CD8-positive, alpha-beta memory T cell (primary cell): ENCODE measurements at regions of chr2 and their contacts with region 1.

Region 1: GRCh38 chr2:233404222-233404621 is 49.9 kb downstream of the DGKD start:
- DNase-seq: peak; percentile 41 to 80 (median 54)
- H3K4me3 ChIP-seq: no peak overlapping the region
- H3K4me3 Mint-ChIP-seq: no peak overlapping the region
- H3K27ac ChIP-seq: no peak overlapping the region
- H3K27ac Mint-ChIP-seq: peak overlapping the region in 7 of 8 donors; percentile 6 to 81 (median 73)
- H3K4me1 ChIP-seq: peaks cover 55% of the 10 kb centered on the region
- H3K4me1 Mint-ChIP-seq: peaks cover 54 to 77% (median 57%) of the 10 kb centered on the region in 3 donors
- H3K27me3 ChIP-seq: no peaks in the 10 kb centered on the region
- H3K27me3 Mint-ChIP-seq: no peaks in the 10 kb centered on the region

Region 2: GRCh38 chr2:233247765-233248164 is 156.5 kb before region 1 on chr2:
- CTCF ChIA-PET with region 1: no interaction called
- POLR2A ChIA-PET with region 1: no interaction called
- DNase-seq: peak in 4 of 5 donors; percentile 13 to 65 (median 28)
- H3K4me3 ChIP-seq: no peak overlapping the region
- H3K4me3 Mint-ChIP-seq: peak overlapping the region in 2 of 7 donors; percentile 22 to 46
- H3K27ac ChIP-seq: no peak overlapping the region
- H3K27ac Mint-ChIP-seq: peak overlapping the region; percentile 20 to 95 (median 78)
- H3K4me1 ChIP-seq: peaks cover 42% of the 10 kb centered on the region
- H3K4me1 Mint-ChIP-seq: peaks cover 38 to 61% (median 52%) of the 10 kb centered on the region in 3 donors
- H3K27me3 ChIP-seq: no peaks in the 10 kb centered on the region
- H3K27me3 Mint-ChIP-seq: peaks cover 0 to 2% of the 10 kb centered on the region in 2 donors

Region 3: GRCh38 chr2:233418761-233419625 is 14.8 kb after region 1 on chr2:
- CTCF ChIA-PET with region 1: interaction called, 151 read pairs
- POLR2A ChIA-PET with region 1: interaction called, 15 read pairs
- DNase-seq: peak; percentile 13 to 74 (median 44)
- H3K4me3 ChIP-seq: peak overlapping the region; percentile 73
- H3K4me3 Mint-ChIP-seq: peak overlapping the region; percentile 87 to 93 (median 88)
- H3K27ac ChIP-seq: no peak overlapping the region
- H3K27ac Mint-ChIP-seq: peak overlapping the region; percentile 67 to 98 (median 93)
- H3K4me1 ChIP-seq: peaks cover 97% of the 10 kb centered on the region
- H3K4me1 Mint-ChIP-seq: peaks cover 87 to 100% (median 96%) of the 10 kb centered on the region in 3 donors
- H3K27me3 ChIP-seq: no peaks in the 10 kb centered on the region
- H3K27me3 Mint-ChIP-seq: no peaks in the 10 kb centered on the region

Region 4: DNA sequence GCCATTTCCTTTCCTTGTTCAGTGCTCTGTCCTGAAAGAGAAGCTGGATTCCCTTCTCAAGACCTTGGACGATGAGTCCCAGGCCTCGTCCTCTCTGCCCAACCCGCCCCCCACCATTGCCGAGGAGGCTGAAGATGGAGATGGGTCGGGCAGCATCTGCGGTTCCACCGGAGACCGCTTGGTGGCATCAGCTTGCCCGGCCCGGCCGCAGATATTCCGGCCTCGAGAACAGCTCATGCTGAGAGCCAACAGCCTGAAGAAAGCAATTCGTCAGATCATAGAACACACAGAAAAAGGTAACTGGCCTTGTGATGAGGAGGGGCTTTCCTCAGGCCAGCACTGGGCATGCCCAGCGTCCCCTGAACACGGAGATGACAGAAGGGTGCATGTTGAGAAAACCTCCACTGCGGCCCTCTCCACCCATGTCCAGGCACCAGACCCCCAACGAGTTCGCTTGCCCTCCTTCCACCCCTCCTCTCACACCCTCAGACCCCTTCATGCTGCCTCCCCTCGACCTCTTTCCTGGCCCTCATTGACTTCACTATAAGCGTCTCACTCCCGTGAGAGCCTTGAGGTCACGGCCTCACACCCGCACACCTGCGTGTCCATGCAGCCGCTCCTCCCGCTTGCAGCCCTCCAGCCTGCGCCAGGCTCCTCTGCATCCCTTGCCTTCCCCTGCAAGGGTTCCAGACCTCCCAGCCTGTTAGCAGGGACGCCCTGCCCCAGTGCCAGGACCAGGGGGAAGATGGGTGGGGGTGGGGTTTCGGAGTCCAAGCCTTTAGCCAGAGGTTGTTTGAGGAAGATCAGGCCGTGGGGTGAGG is 45.1 kb after region 1 on chr2:
- CTCF ChIA-PET with region 1: interaction called, 239 read pairs
- POLR2A ChIA-PET with region 1: interaction called, 8 read pairs
- DNase-seq: peak in 1 of 5 donors; percentile 34
- H3K4me3 ChIP-seq: no peak overlapping the region
- H3K4me3 Mint-ChIP-seq: peak overlapping the region in 1 of 7 donors; percentile 72
- H3K27ac ChIP-seq: no peak overlapping the region
- H3K27ac Mint-ChIP-seq: peak overlapping the region in 1 of 8 donors; percentile 50
- H3K4me1 ChIP-seq: no peaks in the 10 kb centered on the region
- H3K4me1 Mint-ChIP-seq: peaks cover 0 to 3% (median 2%) of the 10 kb centered on the region in 3 donors
- H3K27me3 ChIP-seq: no peaks in the 10 kb centered on the region
- H3K27me3 Mint-ChIP-seq: peaks cover 0 to 4% of the 10 kb centered on the region in 2 donors